Adrenal gland (tissue), 19 donors: ENCODE measurements at regions of chrX and their contacts with region 1.

Region 1: DNA sequence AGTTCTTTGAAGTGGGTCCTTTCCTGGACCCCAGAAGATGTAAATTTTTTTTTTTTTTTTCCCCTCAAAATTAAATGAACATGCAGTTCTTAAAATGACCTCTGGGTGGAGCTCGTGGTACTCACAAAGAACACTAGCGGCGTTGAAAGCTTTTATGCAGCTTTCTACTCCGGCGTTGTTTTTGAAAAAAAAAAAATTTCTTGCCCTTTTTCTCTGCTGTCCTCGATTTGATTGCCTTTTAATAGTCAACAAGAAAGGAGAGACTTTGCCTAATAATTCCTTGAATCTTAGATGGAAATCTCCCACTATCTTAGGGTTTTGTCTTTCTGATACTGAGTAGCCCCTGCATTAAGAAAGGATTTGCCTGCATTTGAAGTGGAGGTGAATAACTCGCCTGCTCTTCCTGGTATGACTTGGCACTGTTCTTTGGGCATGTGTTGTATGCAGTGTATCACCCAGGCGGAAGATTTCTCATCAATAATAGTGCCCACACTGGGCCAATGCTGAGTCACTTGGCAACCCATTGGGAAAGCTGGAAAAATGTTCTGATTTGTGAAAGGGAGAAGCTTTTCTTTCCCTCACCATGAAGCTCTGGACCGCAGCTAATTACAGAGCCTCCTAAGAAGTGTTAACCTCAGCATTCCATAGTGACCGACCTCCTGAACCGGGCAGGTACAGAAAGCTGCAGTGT is 104.0 kb downstream of the PHEX start:
- DNase-seq: peak; percentile 23 to 57 (median 47)
- H3K4me3 ChIP-seq: no peak overlapping the region
- H3K27ac ChIP-seq: peak overlapping the region in 1 of 5 donors; percentile 15
- H3K4me1 ChIP-seq: no peaks in the 10 kb centered on the region
- H3K27me3 ChIP-seq: peaks cover 12% of the 10 kb centered on the region
- CTCF ChIP-seq: peak; percentile 45 to 82 (median 58)
- POLR2A ChIP-seq: no peak

Region 2: GRCh38 chrX:22192417-22193060 is 56.4 kb after region 1 on chrX:
- intact Hi-C with region 1: loop called in 1 of 2 experiments (anchors 5 kb)
- DNase-seq: peak; percentile 45 to 81 (median 71)
- H3K4me3 ChIP-seq: no peak overlapping the region
- H3K27ac ChIP-seq: no peak overlapping the region
- H3K4me1 ChIP-seq: no peaks in the 10 kb centered on the region
- H3K27me3 ChIP-seq: peaks cover 5% of the 10 kb centered on the region
- CTCF ChIP-seq: peak; percentile 55 to 85 (median 68)
- POLR2A ChIP-seq: no peak